OCI-LY7 (cell line): ENCODE measurements at regions of chr6 and their contacts with region 1.

Region 1: DNA sequence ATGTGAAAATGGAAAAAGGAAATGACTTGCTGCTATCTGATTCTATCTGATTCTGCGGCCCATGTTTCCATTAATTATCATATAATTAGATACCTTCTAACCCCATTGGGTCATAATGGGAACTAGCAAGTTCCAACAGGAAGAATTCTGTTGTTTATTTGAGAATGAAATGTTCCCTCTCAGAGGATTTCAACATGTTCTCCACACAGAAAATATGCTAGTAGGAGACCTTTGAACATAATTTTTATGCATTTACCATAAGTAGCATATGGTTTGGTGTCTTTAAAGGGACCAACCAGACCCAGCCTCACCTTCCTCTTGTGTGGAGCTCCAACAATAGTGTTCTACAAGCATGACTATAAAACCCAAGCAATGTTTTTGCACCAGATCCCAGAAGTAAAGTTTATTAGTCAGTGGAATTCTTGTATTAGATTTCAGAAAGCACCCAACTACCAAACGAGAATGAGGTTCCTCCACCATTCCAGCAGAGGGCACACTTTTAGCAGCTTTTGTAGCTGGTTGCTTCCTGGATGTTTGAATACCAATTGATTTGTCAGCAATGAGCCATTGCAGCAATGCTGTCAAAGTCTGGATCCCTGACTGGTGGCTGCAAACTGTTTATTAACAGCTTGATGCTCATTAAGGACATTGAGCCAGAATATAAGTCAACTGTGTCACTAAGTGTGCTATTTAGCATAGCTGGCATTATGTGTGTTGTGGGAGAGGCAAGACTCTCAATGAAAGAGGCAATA is 143.6 kb upstream of the GJE1 start:
- DNase-seq: peak; percentile 46
- H3K4me3 ChIP-seq: no peak overlapping the region
- H3K27ac ChIP-seq: no peak overlapping the region
- H3K4me1 ChIP-seq: no peaks in the 10 kb centered on the region
- CTCF ChIP-seq: peak; percentile 86

Region 2: GRCh38 chr6:142013286-142013685 is 24.2 kb after region 1 on chr6:
- CTCF ChIA-PET with region 1: no interaction called
- POLR2A ChIA-PET with region 1: no interaction called
- intact Hi-C with region 1: no loop called
- DNase-seq: no peak
- H3K4me3 ChIP-seq: no peak overlapping the region
- H3K27ac ChIP-seq: no peak overlapping the region
- H3K4me1 ChIP-seq: no peaks in the 10 kb centered on the region
- CTCF ChIP-seq: no peak

Region 3: DNA sequence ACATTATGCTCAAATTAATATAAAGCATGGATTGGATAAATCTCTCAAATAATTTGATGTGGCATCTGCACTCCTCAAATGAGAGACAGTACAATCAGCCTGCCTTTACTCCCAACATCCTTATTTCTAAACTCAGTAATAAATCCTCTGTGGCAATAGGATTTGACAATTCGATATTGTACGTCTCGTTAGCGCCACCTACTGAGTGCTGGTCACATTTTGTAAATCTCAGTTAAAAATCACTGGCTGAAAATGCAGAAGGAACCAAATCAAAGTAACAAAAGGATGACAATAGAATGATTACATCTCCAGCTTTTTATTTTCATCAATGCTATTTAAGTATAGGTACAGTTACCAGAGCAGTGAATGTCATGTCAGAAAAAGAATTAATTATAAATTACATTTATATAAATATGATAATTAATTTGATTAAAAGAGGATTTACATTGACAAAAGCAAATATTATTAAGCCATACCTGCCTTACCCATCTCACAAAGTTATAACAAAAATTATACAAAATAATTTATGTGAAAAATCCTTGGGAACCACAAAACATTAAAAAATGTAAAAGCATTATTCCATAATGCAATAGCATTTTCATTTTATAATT is 123.4 kb after region 1 on chr6:
- CTCF ChIA-PET with region 1: no interaction called
- POLR2A ChIA-PET with region 1: no interaction called
- intact Hi-C with region 1: loop called (anchors 5 kb)
- DNase-seq: peak; percentile 75
- H3K4me3 ChIP-seq: no peak overlapping the region
- H3K27ac ChIP-seq: no peak overlapping the region
- H3K4me1 ChIP-seq: no peaks in the 10 kb centered on the region
- CTCF ChIP-seq: peak; percentile 95

Region 4: GRCh38 chr6:142155895-142156757 is 167.0 kb after region 1 on chr6:
- CTCF ChIA-PET with region 1: no interaction called
- POLR2A ChIA-PET with region 1: no interaction called
- intact Hi-C with region 1: no loop called
- DNase-seq: peak; percentile 59
- H3K4me3 ChIP-seq: peak overlapping the region; percentile 38
- H3K27ac ChIP-seq: peak overlapping the region; percentile 50
- H3K4me1 ChIP-seq: peaks cover 16% of the 10 kb centered on the region
- CTCF ChIP-seq: peak; percentile 79

Region 5: GRCh38 chr6:142207265-142207877 is 218.2 kb after region 1 on chr6:
- CTCF ChIA-PET with region 1: no interaction called
- POLR2A ChIA-PET with region 1: no interaction called
- intact Hi-C with region 1: loop called (anchors 10 kb)
- DNase-seq: peak; percentile 44
- H3K4me3 ChIP-seq: no peak overlapping the region
- H3K27ac ChIP-seq: no peak overlapping the region
- H3K4me1 ChIP-seq: no peaks in the 10 kb centered on the region
- CTCF ChIP-seq: peak; percentile 90